Left cardiac atrium (tissue), 4 donors: ENCODE measurements at regions of chr6 and their contacts with region 1.

Region 1: DNA sequence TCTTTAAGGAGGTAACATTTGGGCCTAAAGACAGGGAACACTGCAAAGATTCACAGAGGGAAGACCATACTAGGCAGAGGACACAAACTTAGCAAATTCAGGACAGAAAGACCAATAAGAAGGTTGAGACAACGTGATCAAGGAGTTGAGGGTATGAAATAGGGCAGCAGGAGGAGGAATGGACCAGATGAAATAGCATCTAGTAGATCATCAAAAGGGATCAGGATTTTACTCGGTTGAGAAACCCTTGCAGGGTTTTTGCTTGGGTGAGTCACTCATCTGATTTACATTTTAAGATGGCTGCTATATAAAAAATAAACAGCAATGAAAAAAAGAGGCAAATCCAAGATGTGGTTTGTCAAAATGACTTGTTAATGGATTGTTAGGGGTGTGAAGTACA is 4.7 kb downstream of the BCLAF1 start:
- DNase-seq: no peak
- ATAC-seq: no peak

Region 2: DNA sequence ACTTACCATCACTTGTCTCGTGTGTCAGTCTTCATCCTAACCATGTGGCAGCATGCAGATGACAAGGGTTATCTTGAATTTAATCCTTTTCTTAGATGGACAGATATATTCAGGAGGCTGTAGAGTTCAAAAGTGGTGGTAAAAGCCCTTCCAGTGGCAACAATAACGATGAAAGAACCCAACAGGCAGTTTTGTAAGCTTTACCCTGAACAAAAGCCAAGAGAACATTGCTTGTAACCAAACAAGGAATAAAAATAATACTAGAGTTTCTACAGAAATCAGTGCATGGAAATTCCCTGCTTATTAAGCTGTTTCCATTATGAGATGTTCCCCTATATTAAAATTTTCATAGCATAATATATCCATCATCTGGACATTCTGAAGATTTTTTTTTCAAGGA is 363.7 kb before region 1 on chr6:
- intact Hi-C with region 1: no loop called
- DNase-seq: no peak
- ATAC-seq: no peak

Region 3: DNA sequence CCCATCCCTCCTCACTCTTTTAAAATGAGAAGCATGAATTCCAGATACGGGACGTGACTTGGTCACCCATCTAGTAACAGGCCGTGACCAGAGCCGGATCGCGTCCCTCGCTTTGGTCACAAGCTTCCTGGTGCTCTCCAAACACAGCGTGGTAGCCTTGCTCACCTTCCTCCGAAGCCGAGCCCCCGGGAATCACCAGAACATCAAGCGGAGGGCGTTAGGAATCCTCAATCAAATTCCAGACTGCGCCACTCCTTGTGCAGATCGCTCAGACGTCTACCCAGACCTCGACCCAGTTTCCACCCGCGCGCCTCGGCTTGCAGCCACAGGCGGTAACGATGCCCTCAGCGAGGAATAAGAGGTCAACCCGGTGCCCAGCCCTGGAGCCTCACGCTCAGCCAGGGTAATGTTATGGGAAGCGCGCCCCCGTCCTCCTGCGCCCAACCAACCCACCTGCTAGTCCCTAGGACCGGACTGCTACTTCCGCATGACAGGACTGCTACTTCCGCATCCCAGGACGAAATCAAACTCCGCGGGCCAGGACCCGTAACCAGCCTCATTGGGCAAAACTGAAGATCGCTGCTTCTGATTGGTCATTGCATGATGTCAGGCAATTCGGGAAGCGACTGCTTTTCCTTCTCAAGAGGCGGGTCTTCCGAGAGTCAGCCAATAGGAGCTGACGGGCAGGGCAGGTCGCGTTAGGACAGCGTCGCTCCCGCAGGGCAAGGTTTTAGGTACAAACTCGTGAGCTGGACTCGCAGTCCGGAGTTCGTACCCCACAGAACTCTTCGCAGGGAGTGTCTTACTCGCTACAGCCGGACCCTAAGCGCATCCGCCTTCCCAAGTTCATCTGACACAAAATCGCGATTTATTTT is 34.9 kb before region 1 on chr6 and contains the start of gene MTFR2:
- intact Hi-C with region 1: loop called in 1 of 2 experiments (anchors 5 kb)
- DNase-seq: peak; percentile 95
- ATAC-seq: peak; percentile 98 to 100
- total RNA-seq, gene MTFR2: 0.31 to 1.0 TPM